ENCODE measurements at regions of chrX and their contacts with region 1.

Region 1: GRCh38 chrX:1591102-1591900 is at the start of gene AKAP17A:
- DNase-seq: peak; percentile 83
- ATAC-seq: peak; percentile 84
- H3K4me3 ChIP-seq: peak within 1 kb of the TSS; percentile 98
- H3K27ac ChIP-seq: peak within 1 kb of the TSS; percentile 85
- H3K4me1 ChIP-seq: peaks cover 31% of the 10 kb centered on the region
- H3K27me3 ChIP-seq: no peaks in the 10 kb centered on the region
- CTCF ChIP-seq: peak in 2 of 3 experiments; percentile 3 to 25; a peak in 1 of 6 replicates
- EP300 ChIP-seq: no peak
- POLR2A ChIP-seq: peak; percentile 90
- RAD21 ChIP-seq: no peak
- polyA plus RNA-seq, gene AKAP17A: 3.0 to 5.6 TPM

Region 2: GRCh38 chrX:1336331-1336943 is 254.9 kb before region 1 on chrX and contains the start of gene IL3RA:
- CTCF ChIA-PET with region 1: no interaction called
- POLR2A ChIA-PET with region 1: no interaction called
- RAD21 ChIA-PET with region 1: no interaction called
- SMC1A ChIA-PET with region 1: no interaction called
- in situ Hi-C with region 1: no loop called
- intact Hi-C with region 1: loop called (anchors 10 kb)
- DNase-seq: peak; percentile 52
- ATAC-seq: peak; percentile 81
- H3K4me3 ChIP-seq: peak within 1 kb of the TSS; percentile 75
- H3K27ac ChIP-seq: peak within 1 kb of the TSS; percentile 77
- H3K4me1 ChIP-seq: peaks cover 7% of the 10 kb centered on the region; the same call in 1 of the 2 replicates
- H3K27me3 ChIP-seq: no peaks in the 10 kb centered on the region
- CTCF ChIP-seq: no peak
- EP300 ChIP-seq: peak in 1 of 2 experiments; percentile 19; a peak in 1 of 4 replicates
- POLR2A ChIP-seq: peak; percentile 67
- RAD21 ChIP-seq: no peak
- polyA plus RNA-seq, gene IL3RA: 2.1 to 4.5 TPM

Region 3: DNA sequence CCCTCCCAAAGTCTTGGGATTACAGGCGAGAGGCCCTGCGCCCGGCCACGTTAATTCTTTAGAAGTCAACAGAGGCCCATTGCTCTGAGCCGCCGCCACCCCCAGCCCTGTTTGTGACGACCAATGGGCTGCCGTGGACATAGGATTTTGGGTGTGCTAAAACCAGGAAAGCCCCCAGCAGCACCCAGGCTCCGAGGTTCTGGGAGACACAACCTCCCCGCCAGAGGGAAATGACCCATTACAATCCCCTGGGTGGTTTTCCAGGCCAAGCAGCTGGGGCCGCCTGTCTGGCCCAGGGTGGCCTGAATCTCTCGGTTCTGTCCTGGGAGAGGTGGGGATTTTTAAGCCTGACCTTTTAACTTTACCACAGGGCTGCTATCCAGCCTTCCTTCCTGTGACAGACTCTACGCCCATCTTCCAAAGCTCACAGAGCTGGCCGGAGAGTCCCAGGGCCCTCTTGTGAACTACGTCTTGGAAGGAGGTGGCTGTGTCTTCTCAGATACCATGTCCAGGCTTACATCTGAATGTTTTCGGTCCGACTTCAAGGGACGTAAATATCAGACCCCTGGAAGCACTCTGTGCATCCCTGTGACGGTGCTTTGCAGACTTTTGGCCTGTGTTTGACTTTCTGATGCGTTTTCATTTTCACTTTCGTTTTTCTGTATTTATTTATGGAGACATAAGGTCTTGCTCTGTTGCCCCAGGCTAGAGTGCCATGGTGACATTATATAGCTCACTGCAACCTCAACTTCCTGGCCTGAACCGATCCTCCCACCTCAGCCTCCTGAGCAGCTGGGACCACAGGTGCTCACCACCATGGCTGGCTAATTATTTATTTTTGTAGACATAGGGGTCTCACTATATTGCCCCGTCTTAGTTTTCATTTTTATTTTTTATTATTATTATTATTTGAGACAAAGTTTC is 90.3 kb before region 1 on chrX:
- CTCF ChIA-PET with region 1: no interaction called
- POLR2A ChIA-PET with region 1: no interaction called
- RAD21 ChIA-PET with region 1: no interaction called
- SMC1A ChIA-PET with region 1: no interaction called
- in situ Hi-C with region 1: no loop called
- intact Hi-C with region 1: no loop called
- DNase-seq: peak; percentile 90
- ATAC-seq: peak; percentile 69
- H3K4me3 ChIP-seq: no peak overlapping the region
- H3K27ac ChIP-seq: peak overlapping the region; percentile 87
- H3K4me1 ChIP-seq: peaks cover 53% of the 10 kb centered on the region
- H3K27me3 ChIP-seq: no peaks in the 10 kb centered on the region
- CTCF ChIP-seq: no peak
- EP300 ChIP-seq: peak; percentile 49 to 71; a peak in 2 of 4 replicates
- POLR2A ChIP-seq: no peak
- RAD21 ChIP-seq: 0 out of 2 replicates have a peak, but pooled peaks have one; percentile 3

Region 4: DNA sequence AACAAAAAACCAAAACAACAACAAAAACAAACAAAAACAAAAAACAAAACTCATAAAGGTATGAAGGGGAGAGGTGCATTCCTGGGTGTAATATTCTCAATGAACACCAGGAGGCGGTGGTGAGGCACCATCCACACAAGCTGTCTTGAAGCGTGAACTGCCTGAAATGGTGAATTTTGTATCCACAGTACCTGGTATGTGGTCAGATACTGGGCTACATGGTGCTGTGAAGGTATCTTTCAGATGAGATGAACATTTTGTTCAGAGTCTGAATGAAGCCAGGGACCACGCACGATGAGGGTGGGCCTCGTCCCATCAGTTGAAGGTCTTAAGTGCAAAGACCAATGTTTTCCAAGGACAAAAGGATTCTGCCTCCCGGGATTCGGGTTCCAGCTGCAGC is 82.0 kb after region 1 on chrX:
- CTCF ChIA-PET with region 1: no interaction called
- POLR2A ChIA-PET with region 1: no interaction called
- RAD21 ChIA-PET with region 1: no interaction called
- SMC1A ChIA-PET with region 1: no interaction called
- in situ Hi-C with region 1: no loop called
- intact Hi-C with region 1: no loop called
- DNase-seq: no peak
- ATAC-seq: peak; percentile 78
- H3K4me3 ChIP-seq: no peak overlapping the region
- H3K27ac ChIP-seq: no peak overlapping the region
- H3K4me1 ChIP-seq: no peaks in the 10 kb centered on the region
- H3K27me3 ChIP-seq: no peaks in the 10 kb centered on the region
- CTCF ChIP-seq: peak; percentile 48 to 78 (median 69)
- EP300 ChIP-seq: no peak
- POLR2A ChIP-seq: no peak
- RAD21 ChIP-seq: peak; percentile 61